ENCODE measurements at regions of chr1 and their contacts with region 1.

Region 1: GRCh38 chr1:218785928-218786327 is 387.8 kb upstream of the LYPLAL1 start:
- DNase-seq: no peak
- ATAC-seq: no peak
- H3K4me3 ChIP-seq: no peak overlapping the region
- H3K27ac ChIP-seq: no peak overlapping the region
- H3K4me1 ChIP-seq: no peaks in the 10 kb centered on the region
- H3K27me3 ChIP-seq: no peaks in the 10 kb centered on the region
- CTCF ChIP-seq: no peak
- POLR2A ChIP-seq: no peak
- RAD21 ChIP-seq: no peak

Region 2: GRCh38 chr1:218809625-218810024 is 23.7 kb after region 1 on chr1:
- CTCF ChIA-PET with region 1: no interaction called
- POLR2A ChIA-PET with region 1: no interaction called
- RAD21 ChIA-PET with region 1: no interaction called
- intact Hi-C with region 1: loop called (anchors 1 kb)
- DNase-seq: no peak
- ATAC-seq: no peak
- H3K4me3 ChIP-seq: no peak overlapping the region
- H3K27ac ChIP-seq: peak overlapping the region; percentile 48; the same call in 1 of the 2 replicates
- H3K4me1 ChIP-seq: peaks cover under 1 to 11% of the 10 kb centered on the region in 2 experiments; a peak in 3 of 4 replicates
- H3K27me3 ChIP-seq: no peaks in the 10 kb centered on the region
- CTCF ChIP-seq: no peak
- POLR2A ChIP-seq: no peak
- RAD21 ChIP-seq: no peak

Region 3: DNA sequence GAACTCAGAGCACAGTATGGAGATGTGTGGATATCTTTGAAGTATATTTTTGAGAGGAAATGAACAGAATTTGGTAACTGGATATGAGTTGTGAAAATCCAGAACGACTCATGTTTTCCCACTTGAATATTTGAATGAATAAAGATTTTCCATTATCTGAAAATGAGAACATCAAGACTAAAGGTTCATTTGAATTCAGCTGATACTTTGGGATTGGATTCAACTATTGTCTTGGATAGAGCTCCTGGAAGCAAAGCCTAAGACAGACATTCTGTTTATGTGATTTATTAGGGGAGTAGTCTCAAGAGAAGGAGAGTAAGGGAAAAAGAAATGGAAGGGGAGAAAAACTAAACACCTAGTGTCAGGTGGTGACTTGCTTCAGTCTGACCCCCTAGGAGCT is 131.7 kb after region 1 on chr1:
- CTCF ChIA-PET with region 1: no interaction called
- POLR2A ChIA-PET with region 1: no interaction called
- RAD21 ChIA-PET with region 1: no interaction called
- intact Hi-C with region 1: no loop called
- DNase-seq: no peak
- ATAC-seq: no peak
- H3K4me3 ChIP-seq: no peak overlapping the region
- H3K27ac ChIP-seq: no peak overlapping the region
- H3K4me1 ChIP-seq: no peaks in the 10 kb centered on the region
- H3K27me3 ChIP-seq: no peaks in the 10 kb centered on the region
- CTCF ChIP-seq: no peak
- POLR2A ChIP-seq: no peak
- RAD21 ChIP-seq: no peak

Measured in HCT116 (cell line).